ENCODE measurements at regions of chr18 and their contacts with region 1.

Region 1: DNA sequence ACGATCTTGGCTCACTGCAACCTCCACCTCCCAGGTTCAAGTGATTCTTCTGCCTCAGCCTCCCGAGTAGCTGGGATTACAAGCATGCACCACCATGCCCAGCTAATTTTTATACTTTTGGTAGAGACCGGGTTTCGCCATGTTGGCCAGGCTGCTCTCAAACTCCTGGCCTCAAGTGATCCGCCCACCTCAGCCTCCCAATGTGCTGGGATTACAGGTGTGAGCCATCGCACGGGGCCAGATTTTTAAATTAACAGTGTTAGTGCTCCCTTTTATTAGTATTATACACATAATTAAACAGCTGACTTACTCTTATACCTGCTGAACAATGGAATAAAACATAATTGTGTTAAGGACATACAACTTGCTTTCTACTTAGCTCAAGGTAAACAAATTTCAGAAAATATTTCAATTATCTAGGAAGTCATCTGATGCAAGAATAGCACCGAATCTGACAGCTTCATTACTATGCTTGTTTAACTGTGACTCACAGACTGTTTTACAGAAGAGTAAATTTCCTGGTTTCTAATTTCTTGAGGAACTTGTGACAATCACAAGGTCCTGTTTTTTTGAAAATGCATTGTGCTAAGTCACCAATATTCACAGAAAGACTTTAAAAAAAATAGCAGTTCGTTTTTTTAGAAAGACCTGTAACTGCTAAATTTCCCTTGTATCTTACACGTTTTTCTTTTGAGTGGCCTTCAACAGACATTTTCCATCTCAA is 51.2 kb downstream of the SPIRE1 start:
- DNase-seq: no peak
- H3K4me3 ChIP-seq: no peak overlapping the region
- H3K27ac ChIP-seq: peak overlapping the region; percentile 36 to 50
- H3K4me1 ChIP-seq: peaks cover 0 to 32% (median 14%) of the 10 kb centered on the region in 4 donors
- H3K27me3 ChIP-seq: no peaks in the 10 kb centered on the region
- CTCF ChIP-seq: no peak

Region 2: DNA sequence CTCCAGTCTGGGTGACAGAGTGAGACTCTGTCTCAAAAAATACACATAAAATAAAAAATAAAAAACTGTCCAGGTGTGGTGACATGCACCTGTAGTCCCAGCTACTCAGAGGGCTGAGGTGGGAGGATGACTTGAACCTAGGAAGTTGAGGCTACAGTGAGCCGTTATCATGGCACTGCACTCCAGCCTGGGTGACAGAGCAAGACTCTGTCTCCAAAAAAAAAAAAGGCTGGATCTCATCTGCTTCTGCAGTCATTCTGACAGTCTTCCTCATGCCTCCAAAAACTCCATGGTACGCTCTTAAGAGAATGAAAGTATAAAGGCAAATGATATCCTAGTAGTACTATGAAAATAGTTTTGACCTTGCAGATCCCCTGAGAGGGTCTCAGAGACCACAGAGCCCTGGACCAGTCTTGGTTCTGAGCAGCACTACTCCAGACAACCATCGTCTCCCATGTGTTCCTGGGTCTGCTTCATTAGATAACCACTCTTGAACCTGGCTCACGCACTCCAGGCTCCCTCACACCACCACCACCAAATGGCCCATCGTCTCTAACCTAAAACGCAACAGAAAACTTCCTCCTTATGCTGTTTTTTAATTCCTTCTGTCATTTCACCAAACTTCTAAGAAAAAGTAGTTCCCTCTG is 25.2 kb after region 1 on chr18:
- intact Hi-C with region 1: loop called (anchors 1 kb)
- DNase-seq: no peak
- H3K4me3 ChIP-seq: no peak overlapping the region
- H3K27ac ChIP-seq: no peak overlapping the region
- H3K4me1 ChIP-seq: peaks cover 0 to 6% (median 0%) of the 10 kb centered on the region in 4 donors
- H3K27me3 ChIP-seq: no peaks in the 10 kb centered on the region
- CTCF ChIP-seq: no peak